ENCODE measurements at regions of chr10 and their contacts with region 1.

Region 1: GRCh38 chr10:50497757-50498156 is 126.0 kb downstream of the SGMS1 start:
- DNase-seq: peak; percentile 83
- ATAC-seq: peak; percentile 90
- H3K4me3 ChIP-seq: no peak overlapping the region
- H3K27ac ChIP-seq: peak overlapping the region; percentile 93
- H3K4me1 ChIP-seq: peaks cover 32% of the 10 kb centered on the region
- H3K27me3 ChIP-seq: no peaks in the 10 kb centered on the region
- CTCF ChIP-seq: no peak
- EP300 ChIP-seq: peak; percentile 36 to 76
- POLR2A ChIP-seq: no peak
- RAD21 ChIP-seq: no peak

Region 2: GRCh38 chr10:50431791-50432190 is 66.0 kb before region 1 on chr10:
- CTCF ChIA-PET with region 1: interaction called, 4 read pairs
- POLR2A ChIA-PET with region 1: interaction called, 3 read pairs
- RAD21 ChIA-PET with region 1: interaction called, 12 read pairs
- SMC1A ChIA-PET with region 1: interaction called, 20 read pairs
- in situ Hi-C with region 1: no loop called
- intact Hi-C with region 1: no loop called
- DNase-seq: peak; percentile 96
- ATAC-seq: peak; percentile 89
- H3K4me3 ChIP-seq: peak overlapping the region; percentile 45; the same call in 1 of the 2 replicates
- H3K27ac ChIP-seq: peak overlapping the region; percentile 80; the same call in 1 of the 2 replicates
- H3K4me1 ChIP-seq: peaks cover 25% of the 10 kb centered on the region
- H3K27me3 ChIP-seq: no peaks in the 10 kb centered on the region
- CTCF ChIP-seq: no peak
- EP300 ChIP-seq: peak; percentile 99
- POLR2A ChIP-seq: no peak
- RAD21 ChIP-seq: no peak; the same call in 1 of the 2 replicates

Region 3: GRCh38 chr10:50452603-50453002 is 45.2 kb before region 1 on chr10:
- CTCF ChIA-PET with region 1: interaction called, 4 read pairs
- POLR2A ChIA-PET with region 1: interaction called, 5 read pairs
- RAD21 ChIA-PET with region 1: interaction called, 5 read pairs
- SMC1A ChIA-PET with region 1: interaction called, 17 read pairs
- in situ Hi-C with region 1: no loop called
- intact Hi-C with region 1: no loop called
- DNase-seq: no peak
- ATAC-seq: peak; percentile 57
- H3K4me3 ChIP-seq: peak overlapping the region; percentile 7; the same call in 1 of the 2 replicates
- H3K27ac ChIP-seq: peak overlapping the region; percentile 77
- H3K4me1 ChIP-seq: peaks cover 42% of the 10 kb centered on the region
- H3K27me3 ChIP-seq: no peaks in the 10 kb centered on the region
- CTCF ChIP-seq: no peak
- EP300 ChIP-seq: peak; percentile 65 to 67; a peak in 2 of 4 replicates
- POLR2A ChIP-seq: no peak
- RAD21 ChIP-seq: no peak

Region 4: DNA sequence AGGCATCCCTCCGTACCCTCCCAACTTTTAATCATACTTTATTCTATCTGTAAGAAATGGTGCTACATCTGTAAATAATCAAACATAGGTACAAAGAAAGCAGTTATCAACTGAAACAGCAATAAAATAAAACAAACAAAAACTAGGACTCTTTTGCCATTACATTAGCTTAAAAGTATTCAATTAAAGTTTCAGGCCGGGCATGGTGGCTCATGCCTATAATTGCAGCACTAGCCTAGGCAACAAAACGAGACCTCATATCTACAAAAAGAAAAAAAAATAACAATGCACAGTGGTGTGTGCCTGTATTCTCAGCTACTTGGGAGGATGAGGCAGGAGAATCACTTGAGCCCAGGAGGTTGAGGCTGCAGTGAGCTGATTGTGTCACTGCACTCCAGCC is 35.9 kb before region 1 on chr10:
- CTCF ChIA-PET with region 1: interaction called, 3 read pairs
- POLR2A ChIA-PET with region 1: interaction called, 5 read pairs
- RAD21 ChIA-PET with region 1: interaction called, 6 read pairs
- SMC1A ChIA-PET with region 1: interaction called, 50 read pairs
- in situ Hi-C with region 1: no loop called
- intact Hi-C with region 1: no loop called
- DNase-seq: no peak
- ATAC-seq: no peak
- H3K4me3 ChIP-seq: no peak overlapping the region
- H3K27ac ChIP-seq: no peak overlapping the region
- H3K4me1 ChIP-seq: peaks cover 3% of the 10 kb centered on the region; the same call in 1 of the 2 replicates
- H3K27me3 ChIP-seq: no peaks in the 10 kb centered on the region; a peak in 1 of 4 replicates
- CTCF ChIP-seq: no peak
- EP300 ChIP-seq: no peak
- POLR2A ChIP-seq: no peak
- RAD21 ChIP-seq: no peak

Region 5: GRCh38 chr10:50470345-50470744 is 27.4 kb before region 1 on chr10:
- CTCF ChIA-PET with region 1: interaction called, 3 read pairs
- POLR2A ChIA-PET with region 1: interaction called, 10 read pairs
- RAD21 ChIA-PET with region 1: interaction called, 9 read pairs
- SMC1A ChIA-PET with region 1: interaction called, 50 read pairs
- in situ Hi-C with region 1: no loop called
- intact Hi-C with region 1: no loop called
- DNase-seq: no peak
- ATAC-seq: peak; percentile 75
- H3K4me3 ChIP-seq: no peak overlapping the region
- H3K27ac ChIP-seq: peak overlapping the region; percentile 51
- H3K4me1 ChIP-seq: peaks cover 45% of the 10 kb centered on the region
- H3K27me3 ChIP-seq: no peaks in the 10 kb centered on the region
- CTCF ChIP-seq: no peak
- EP300 ChIP-seq: no peak
- POLR2A ChIP-seq: no peak
- RAD21 ChIP-seq: no peak

Region 6: GRCh38 chr10:50653142-50653541 is 155.4 kb after region 1 on chr10:
- CTCF ChIA-PET with region 1: no interaction called
- POLR2A ChIA-PET with region 1: no interaction called
- RAD21 ChIA-PET with region 1: interaction called, 3 read pairs
- SMC1A ChIA-PET with region 1: interaction called, 10 read pairs
- in situ Hi-C with region 1: no loop called
- intact Hi-C with region 1: no loop called
- DNase-seq: no peak
- ATAC-seq: peak; percentile 27
- H3K4me3 ChIP-seq: no peak overlapping the region
- H3K27ac ChIP-seq: no peak overlapping the region
- H3K4me1 ChIP-seq: peaks cover 28% of the 10 kb centered on the region
- H3K27me3 ChIP-seq: no peaks in the 10 kb centered on the region
- CTCF ChIP-seq: peak; percentile 16 to 66 (median 53); a peak in 4 of 6 replicates
- EP300 ChIP-seq: no peak
- POLR2A ChIP-seq: no peak
- RAD21 ChIP-seq: peak; percentile 45

Measured in GM12878 (cell line).